ENCODE measurements at regions of chr1 and their contacts with region 1.

Region 1: GRCh38 chr1:56831871-56832693 is 12.9 kb upstream of the FYB2 start:
- DNase-seq: peak; percentile 41 to 82 (median 54)
- ATAC-seq: peak; percentile 62
- H3K4me3 ChIP-seq: no peak overlapping the region
- H3K4me3 Mint-ChIP-seq: no peak overlapping the region
- H3K27ac ChIP-seq: no peak overlapping the region
- H3K27ac Mint-ChIP-seq: no peak overlapping the region
- H3K4me1 ChIP-seq: no peaks in the 10 kb centered on the region
- H3K4me1 Mint-ChIP-seq: peaks cover 8% of the 10 kb centered on the region
- H3K27me3 ChIP-seq: peaks cover 0 to 7% of the 10 kb centered on the region in 2 experiments
- H3K27me3 Mint-ChIP-seq: peaks cover 35% of the 10 kb centered on the region
- CTCF ChIP-seq: peak; percentile 98

Region 2: DNA sequence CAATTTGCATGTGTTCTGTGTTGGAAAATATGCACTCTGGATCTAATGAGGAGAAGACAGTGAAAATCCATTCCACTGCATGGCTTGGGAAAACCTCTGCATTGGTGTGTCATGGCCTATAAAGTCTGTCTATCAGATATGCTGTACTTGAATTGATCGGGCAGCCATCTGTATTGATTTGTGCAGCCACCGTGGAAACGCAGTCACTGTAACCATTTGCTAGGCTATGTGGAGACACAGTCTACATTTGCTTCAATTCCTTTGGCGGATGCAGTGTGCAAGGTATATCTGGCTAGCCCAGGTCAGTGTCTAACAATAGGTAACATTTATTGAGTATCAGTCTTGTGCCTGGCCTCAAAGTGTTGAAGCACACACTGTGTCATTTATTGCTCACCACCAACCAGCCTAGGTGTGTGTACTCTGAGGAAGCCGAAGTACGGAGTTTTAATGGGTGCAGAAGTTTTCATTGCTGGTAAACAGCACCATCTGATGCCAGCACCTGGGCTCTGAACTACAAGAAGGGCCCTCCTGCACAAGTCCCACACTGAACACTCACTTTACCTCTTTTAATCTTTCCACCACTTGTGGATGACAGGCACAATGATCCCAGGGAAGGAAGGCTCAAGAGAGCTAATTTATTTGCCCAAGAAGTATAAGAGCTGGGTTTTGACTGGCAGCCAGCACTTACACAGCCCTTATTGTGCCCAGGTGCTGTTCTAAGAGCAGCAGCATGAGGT is 508.4 kb after region 1 on chr1:
- CTCF ChIA-PET with region 1: no interaction called
- POLR2A ChIA-PET with region 1: no interaction called
- intact Hi-C with region 1: loop called in 1 of 2 experiments (anchors 5 kb)
- DNase-seq: peak in 2 of 14 experiments; percentile 5 to 11
- ATAC-seq: no peak
- H3K4me3 ChIP-seq: no peak overlapping the region
- H3K4me3 Mint-ChIP-seq: no peak overlapping the region
- H3K27ac ChIP-seq: no peak overlapping the region
- H3K27ac Mint-ChIP-seq: no peak overlapping the region
- H3K4me1 ChIP-seq: no peaks in the 10 kb centered on the region
- H3K4me1 Mint-ChIP-seq: no peaks in the 10 kb centered on the region
- H3K27me3 ChIP-seq: no peaks in the 10 kb centered on the region
- H3K27me3 Mint-ChIP-seq: peaks cover 7% of the 10 kb centered on the region
- CTCF ChIP-seq: no peak

Region 3: DNA sequence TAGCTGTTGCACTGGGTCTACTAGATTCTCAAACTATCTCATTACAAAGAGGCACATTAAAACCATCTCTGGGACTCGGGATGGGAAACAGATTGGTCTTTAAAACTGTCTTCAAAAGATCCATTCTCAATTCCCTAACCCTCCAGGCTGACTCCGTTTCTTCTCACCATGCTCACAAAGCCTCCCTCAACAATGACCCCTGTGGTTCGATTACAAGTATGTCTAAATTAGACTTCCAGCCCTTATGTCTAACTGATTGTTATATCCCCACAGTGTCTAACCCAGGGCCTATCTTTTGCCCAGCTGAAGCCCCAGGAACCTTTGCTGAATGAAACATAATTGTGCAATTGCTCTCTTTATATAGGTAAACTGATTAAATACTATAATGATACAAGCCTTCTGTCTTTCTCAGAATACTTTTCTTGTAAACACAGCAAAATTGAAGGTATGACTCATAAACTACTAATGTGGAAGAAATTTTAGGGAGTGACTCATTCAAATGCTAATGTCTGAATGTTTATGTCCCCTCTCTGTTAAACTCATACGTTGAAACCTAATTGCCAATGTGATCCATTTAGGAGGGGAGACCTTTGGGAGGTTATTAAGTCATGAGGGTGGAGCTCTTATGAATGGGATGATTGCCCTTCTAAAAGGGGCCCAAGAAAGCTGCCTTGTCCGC is 657.4 kb after region 1 on chr1:
- CTCF ChIA-PET with region 1: no interaction called
- POLR2A ChIA-PET with region 1: no interaction called
- intact Hi-C with region 1: no loop called
- DNase-seq: no peak
- ATAC-seq: no peak
- H3K4me3 ChIP-seq: no peak overlapping the region
- H3K4me3 Mint-ChIP-seq: no peak overlapping the region
- H3K27ac ChIP-seq: no peak overlapping the region
- H3K27ac Mint-ChIP-seq: no peak overlapping the region
- H3K4me1 ChIP-seq: no peaks in the 10 kb centered on the region
- H3K4me1 Mint-ChIP-seq: no peaks in the 10 kb centered on the region
- H3K27me3 ChIP-seq: no peaks in the 10 kb centered on the region
- H3K27me3 Mint-ChIP-seq: no peaks in the 10 kb centered on the region
- CTCF ChIP-seq: no peak

Region 4: DNA sequence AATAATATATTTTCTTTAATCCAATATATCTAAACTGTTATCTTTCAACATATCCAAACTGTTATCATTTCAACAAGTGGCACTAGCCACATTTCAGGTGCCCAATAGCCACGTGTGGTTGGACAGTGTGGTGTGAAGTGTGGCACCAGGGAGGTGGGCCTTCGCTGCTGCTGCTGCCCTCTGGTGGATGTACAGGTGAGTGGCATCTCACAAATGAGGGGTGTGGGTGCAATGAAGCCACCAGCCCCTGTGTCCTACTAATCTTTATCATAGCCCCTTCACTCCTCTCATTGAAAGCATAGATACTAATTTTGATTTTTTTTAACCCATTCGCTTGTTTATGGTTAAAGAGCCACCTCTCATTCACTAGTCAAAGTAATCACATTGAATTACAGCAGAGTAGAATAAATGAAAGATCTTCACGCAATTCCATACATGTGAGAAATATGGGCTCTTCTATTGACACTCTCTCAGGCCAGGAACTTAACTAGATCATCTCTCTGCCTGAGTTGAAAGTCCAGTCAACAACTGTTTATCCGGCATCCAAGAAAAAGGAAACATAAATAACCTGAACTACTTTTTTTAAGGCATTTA is 1215.3 kb after region 1 on chr1:
- CTCF ChIA-PET with region 1: no interaction called
- POLR2A ChIA-PET with region 1: no interaction called
- intact Hi-C with region 1: loop called in 1 of 2 experiments (anchors 2 kb)
- DNase-seq: peak in 6 of 14 experiments; percentile 1 to 32 (median 15)
- ATAC-seq: no peak
- H3K4me3 ChIP-seq: no peak overlapping the region
- H3K4me3 Mint-ChIP-seq: no peak overlapping the region
- H3K27ac ChIP-seq: no peak overlapping the region
- H3K27ac Mint-ChIP-seq: no peak overlapping the region
- H3K4me1 ChIP-seq: no peaks in the 10 kb centered on the region
- H3K4me1 Mint-ChIP-seq: no peaks in the 10 kb centered on the region
- H3K27me3 ChIP-seq: peaks cover 0 to 4% of the 10 kb centered on the region in 2 experiments
- H3K27me3 Mint-ChIP-seq: no peaks in the 10 kb centered on the region
- CTCF ChIP-seq: peak; percentile 55

Region 5: DNA sequence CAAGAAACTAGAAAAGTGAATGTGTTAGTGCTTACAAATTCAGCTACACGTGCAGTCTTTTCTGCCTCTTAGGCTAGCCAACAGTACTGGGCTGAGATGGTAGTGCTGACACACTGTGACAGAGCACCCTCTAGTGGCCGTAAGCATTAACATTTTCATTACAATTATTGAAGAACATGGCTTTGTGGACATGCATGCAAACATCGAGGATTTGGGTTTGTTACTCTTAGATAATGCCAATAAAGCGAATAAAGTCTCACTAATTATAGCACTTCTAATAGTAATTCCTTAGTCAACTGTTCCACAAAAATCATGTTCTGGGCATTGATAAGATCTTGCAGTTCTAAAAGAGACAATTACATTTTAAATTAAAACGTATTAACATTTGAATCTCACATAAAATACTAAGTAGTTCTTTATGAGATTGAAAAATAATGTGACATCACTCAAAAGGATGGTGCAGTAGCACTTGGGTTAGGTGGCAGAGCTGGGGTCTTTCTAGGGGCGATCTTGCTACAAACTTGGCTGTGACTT is 1820.6 kb after region 1 on chr1:
- CTCF ChIA-PET with region 1: interaction called, 4 read pairs
- POLR2A ChIA-PET with region 1: no interaction called
- intact Hi-C with region 1: loop called in 1 of 2 experiments (anchors 5 kb)
- DNase-seq: peak; percentile 16 to 86 (median 42)
- ATAC-seq: peak; percentile 92
- H3K4me3 ChIP-seq: no peak overlapping the region
- H3K4me3 Mint-ChIP-seq: no peak overlapping the region
- H3K27ac ChIP-seq: no peak overlapping the region
- H3K27ac Mint-ChIP-seq: no peak overlapping the region
- H3K4me1 ChIP-seq: peaks cover 11% of the 10 kb centered on the region
- H3K4me1 Mint-ChIP-seq: peaks cover 23% of the 10 kb centered on the region
- H3K27me3 ChIP-seq: no peaks in the 10 kb centered on the region
- H3K27me3 Mint-ChIP-seq: no peaks in the 10 kb centered on the region
- CTCF ChIP-seq: peak; percentile 96